Activated CD8-positive, alpha-beta T cell treated with anti-CD3 and anti-CD28 coated beads for 36 hours (primary cell): ENCODE measurements at regions of chr16 and their contacts with region 1.

Region 1: DNA sequence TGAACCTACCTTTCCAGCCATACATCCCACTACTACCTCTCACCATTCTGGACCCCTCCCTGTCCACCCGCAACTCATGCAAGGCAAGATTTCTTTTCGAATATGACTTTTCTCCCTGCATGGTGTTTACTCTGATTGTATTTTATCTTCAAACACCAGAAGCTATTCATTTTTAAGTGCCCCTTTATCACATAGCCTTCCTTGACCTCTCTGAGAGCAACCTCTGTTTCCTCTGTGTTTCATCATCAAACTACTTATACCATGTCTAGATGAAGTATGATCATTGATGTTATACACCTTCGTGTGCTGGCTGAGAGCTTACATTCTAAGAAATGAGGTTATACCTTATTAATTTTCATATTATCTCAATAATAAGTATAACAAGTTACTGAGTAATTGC is 31.8 kb downstream of the SYCE1L start:
- DNase-seq: no peak
- ATAC-seq: no peak
- H3K4me3 Mint-ChIP-seq: no peak overlapping the region
- H3K27ac Mint-ChIP-seq: no peak overlapping the region
- H3K4me1 Mint-ChIP-seq: no peaks in the 10 kb centered on the region
- H3K27me3 Mint-ChIP-seq: peaks cover 24% of the 10 kb centered on the region
- CTCF ChIP-seq: no peak

Region 2: GRCh38 chr16:77584205-77584859 is 353.3 kb after region 1 on chr16:
- CTCF ChIA-PET with region 1: interaction called, 146 read pairs
- POLR2A ChIA-PET with region 1: no interaction called
- intact Hi-C with region 1: loop called (anchors 1 kb)
- DNase-seq: peak; percentile 60
- ATAC-seq: peak; percentile 74
- H3K4me3 Mint-ChIP-seq: no peak overlapping the region
- H3K27ac Mint-ChIP-seq: no peak overlapping the region
- H3K4me1 Mint-ChIP-seq: peaks cover 3% of the 10 kb centered on the region
- H3K27me3 Mint-ChIP-seq: peaks cover 11% of the 10 kb centered on the region
- CTCF ChIP-seq: peak; percentile 82